Activated CD8-positive, alpha-beta T cell treated with anti-CD3 and anti-CD28 coated beads, Interleukin-2, amount 10 ng/mL, durations not matched to agents 7 days and 5 days (primary cell): ENCODE measurements at regions of chr1 and their contacts with region 1.

Region 1: DNA sequence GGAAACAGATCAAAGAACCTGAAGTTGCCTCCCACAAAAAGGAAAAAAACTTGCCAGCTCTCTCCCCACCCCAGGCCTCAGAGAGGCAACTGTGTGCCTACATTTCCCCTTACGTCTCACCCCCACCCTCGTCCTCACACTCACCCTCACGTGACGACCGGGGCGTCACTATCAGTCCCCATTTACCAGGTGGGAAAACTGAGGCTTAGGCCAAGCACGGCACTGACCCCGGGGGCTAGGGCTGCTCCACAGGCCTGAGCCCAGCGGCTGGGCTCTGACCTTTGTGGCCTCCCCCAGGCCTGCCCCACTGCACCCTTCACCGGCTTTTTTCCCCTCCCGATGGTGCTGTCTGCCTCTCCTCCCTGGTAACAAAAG is 51.5 kb upstream of the RUNX3 start:
- DNase-seq: peak; percentile 70
- ATAC-seq: peak; percentile 52
- H3K4me3 Mint-ChIP-seq: peak overlapping the region; percentile 63
- H3K27ac Mint-ChIP-seq: peak overlapping the region; percentile 93
- H3K4me1 Mint-ChIP-seq: peaks cover 93% of the 10 kb centered on the region
- H3K27me3 Mint-ChIP-seq: no peaks in the 10 kb centered on the region

Region 2: GRCh38 chr1:24970399-24970753 is 11.2 kb before region 1 on chr1:
- CTCF ChIA-PET with region 1: interaction called, 48 read pairs
- POLR2A ChIA-PET with region 1: interaction called, 9 read pairs
- DNase-seq: no peak
- ATAC-seq: no peak
- H3K4me3 Mint-ChIP-seq: peak overlapping the region; percentile 66
- H3K27ac Mint-ChIP-seq: peak overlapping the region; percentile 90
- H3K4me1 Mint-ChIP-seq: peaks cover 87% of the 10 kb centered on the region
- H3K27me3 Mint-ChIP-seq: no peaks in the 10 kb centered on the region